Activated naive CD4-positive, alpha-beta T cell treated with anti-CD3 and anti-CD28 coated beads for 36 hours (primary cell): ENCODE measurements at regions of chr21 and their contacts with region 1.

Region 1: GRCh38 chr21:42187976-42188653 is 30.8 kb upstream of the ABCG1 start:
- DNase-seq: peak; percentile 94
- H3K4me3 Mint-ChIP-seq: peak overlapping the region; percentile 60
- H3K27ac Mint-ChIP-seq: peak overlapping the region; percentile 95
- H3K4me1 Mint-ChIP-seq: peaks cover 70% of the 10 kb centered on the region
- H3K27me3 Mint-ChIP-seq: no peaks in the 10 kb centered on the region

Region 2: GRCh38 chr21:42164064-42164789 is 23.9 kb before region 1 on chr21:
- CTCF ChIA-PET with region 1: interaction called, 5 read pairs
- intact Hi-C with region 1: loop called (anchors 1 kb)
- DNase-seq: peak; percentile 83
- H3K4me3 Mint-ChIP-seq: no peak overlapping the region
- H3K27ac Mint-ChIP-seq: no peak overlapping the region
- H3K4me1 Mint-ChIP-seq: peaks cover 33% of the 10 kb centered on the region
- H3K27me3 Mint-ChIP-seq: peaks cover 1% of the 10 kb centered on the region

Region 3: DNA sequence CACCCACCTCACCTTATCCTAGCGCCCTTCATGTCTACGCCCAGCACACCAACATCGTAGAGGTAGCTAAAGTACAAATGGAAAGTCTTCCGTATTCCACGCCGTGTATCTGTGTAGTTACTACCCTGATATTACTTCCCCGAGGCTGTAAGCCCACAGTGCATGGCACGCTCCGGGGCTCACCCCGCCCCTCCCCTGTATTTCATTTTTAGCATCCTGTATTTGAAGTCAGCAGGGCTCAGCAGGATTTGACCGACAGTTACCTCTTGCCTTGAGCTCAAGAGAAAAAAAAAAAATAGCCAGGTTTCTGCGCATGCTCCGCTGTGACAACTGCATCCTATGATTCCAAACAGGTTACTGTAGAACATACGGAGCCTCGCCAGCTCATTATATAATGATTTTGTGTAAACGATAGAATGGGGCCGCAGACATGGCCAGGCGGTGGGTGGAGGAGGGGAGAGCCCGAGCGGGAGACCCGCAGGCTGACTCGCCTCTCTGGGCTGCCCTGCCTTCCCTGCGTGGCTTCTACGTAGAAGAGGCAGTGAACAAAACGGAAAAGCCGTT is 32.1 kb after region 1 on chr21:
- CTCF ChIA-PET with region 1: interaction called, 5 read pairs
- intact Hi-C with region 1: loop called (anchors 1 kb)
- DNase-seq: peak; percentile 86
- H3K4me3 Mint-ChIP-seq: peak overlapping the region; percentile 82
- H3K27ac Mint-ChIP-seq: peak overlapping the region; percentile 87
- H3K4me1 Mint-ChIP-seq: peaks cover 14% of the 10 kb centered on the region
- H3K27me3 Mint-ChIP-seq: no peaks in the 10 kb centered on the region

Region 4: GRCh38 chr21:42233067-42233961 is 45.2 kb after region 1 on chr21:
- CTCF ChIA-PET with region 1: interaction called, 6 read pairs
- intact Hi-C with region 1: loop called (anchors 1 kb)
- DNase-seq: peak; percentile 95
- H3K4me3 Mint-ChIP-seq: peak overlapping the region; percentile 72
- H3K27ac Mint-ChIP-seq: peak overlapping the region; percentile 95
- H3K4me1 Mint-ChIP-seq: peaks cover 95% of the 10 kb centered on the region
- H3K27me3 Mint-ChIP-seq: no peaks in the 10 kb centered on the region

Region 5: DNA sequence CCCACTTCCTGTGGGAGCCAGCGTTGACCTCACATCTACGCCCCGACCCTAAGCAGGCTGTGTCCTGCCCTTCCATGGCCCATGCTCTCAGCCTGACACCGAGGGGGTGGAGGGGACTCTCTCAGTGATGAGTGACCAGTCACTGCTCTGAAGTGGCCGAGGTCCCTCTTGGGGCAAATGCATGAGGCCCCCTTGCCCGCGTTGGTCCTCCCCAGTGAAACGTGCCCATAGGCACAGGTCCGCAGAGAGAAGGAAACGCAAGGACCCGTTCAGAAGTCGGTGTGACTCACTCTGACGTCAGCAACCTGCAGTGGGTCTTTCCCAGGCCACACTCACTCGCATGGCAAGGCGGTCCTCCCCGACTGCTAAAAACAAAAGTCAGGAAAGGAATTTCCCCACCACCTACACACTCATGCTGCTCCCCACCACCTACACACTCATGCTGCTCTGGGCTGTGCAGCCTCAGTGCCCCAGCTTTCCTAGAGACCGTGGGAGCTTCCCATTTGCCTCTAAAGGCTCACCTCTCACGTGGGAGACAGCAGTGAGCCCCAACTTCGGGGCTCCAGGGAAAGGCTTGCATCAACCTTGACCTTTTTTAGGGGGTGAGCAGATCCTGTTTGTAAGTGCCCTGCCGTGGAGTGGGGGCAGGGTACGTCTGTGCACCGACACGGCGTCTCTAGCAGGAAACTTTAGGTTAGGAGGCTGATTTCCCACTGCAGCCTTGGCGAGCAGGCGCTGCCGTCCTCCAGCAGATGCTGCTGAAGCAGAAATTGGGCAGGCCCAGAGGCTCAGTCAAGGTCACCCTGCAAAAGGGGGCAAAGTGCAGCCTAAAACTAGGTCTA is 227.0 kb after region 1 on chr21:
- CTCF ChIA-PET with region 1: no interaction called
- intact Hi-C with region 1: loop called (anchors 2 kb)
- DNase-seq: peak; percentile 99
- H3K4me3 Mint-ChIP-seq: peak overlapping the region; percentile 64
- H3K27ac Mint-ChIP-seq: peak overlapping the region; percentile 94
- H3K4me1 Mint-ChIP-seq: peaks cover 64% of the 10 kb centered on the region
- H3K27me3 Mint-ChIP-seq: no peaks in the 10 kb centered on the region

Region 6: DNA sequence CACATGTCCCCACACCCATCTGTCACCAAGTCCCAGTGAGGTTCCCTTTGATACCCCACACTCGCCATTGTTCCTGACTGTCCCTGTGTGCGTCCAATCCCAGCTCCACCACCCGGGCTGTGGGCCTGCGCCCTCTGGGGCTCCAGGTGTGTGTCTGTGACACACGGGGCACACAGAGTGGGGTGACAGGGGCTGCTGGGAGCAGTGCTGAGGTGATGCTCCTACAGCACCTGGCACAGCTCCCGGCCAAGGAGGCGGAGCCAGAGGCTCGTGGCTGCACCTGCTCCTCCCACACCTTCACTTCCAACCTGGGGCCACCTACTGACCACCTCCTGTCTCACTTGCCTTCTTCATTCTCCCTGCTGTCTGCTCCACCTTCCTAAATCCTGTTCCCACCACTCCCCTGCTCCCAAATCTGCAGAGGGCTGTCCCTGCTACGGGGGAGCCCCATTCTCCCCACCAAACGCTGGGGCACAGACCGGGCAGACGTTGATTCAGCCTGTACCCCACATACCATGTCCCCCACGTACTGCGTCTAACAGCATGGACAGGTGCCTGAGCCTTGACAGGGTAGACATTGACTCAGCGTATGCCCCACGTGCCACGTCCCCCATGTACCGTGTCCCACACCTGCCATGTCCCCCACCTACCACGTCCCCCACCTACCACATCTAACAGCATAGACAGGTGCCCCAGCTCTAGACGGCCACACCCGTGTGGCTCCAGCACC is 674.8 kb after region 1 on chr21:
- CTCF ChIA-PET with region 1: no interaction called
- intact Hi-C with region 1: no loop called
- DNase-seq: no peak
- H3K4me3 Mint-ChIP-seq: no peak overlapping the region
- H3K27ac Mint-ChIP-seq: no peak overlapping the region
- H3K4me1 Mint-ChIP-seq: peaks cover 11% of the 10 kb centered on the region
- H3K27me3 Mint-ChIP-seq: no peaks in the 10 kb centered on the region